ENCODE measurements at regions of chr12 and their contacts with region 1.

Region 1: GRCh38 chr12:53451661-53452158 is at the start of gene PCBP2:
- DNase-seq: peak; percentile 99
- total RNA-seq, gene PCBP2: 520 TPM

Region 2: GRCh38 chr12:52522346-52523011 is 929.2 kb before region 1 on chr12:
- intact Hi-C with region 1: no loop called
- DNase-seq: peak; percentile 69

Region 3: DNA sequence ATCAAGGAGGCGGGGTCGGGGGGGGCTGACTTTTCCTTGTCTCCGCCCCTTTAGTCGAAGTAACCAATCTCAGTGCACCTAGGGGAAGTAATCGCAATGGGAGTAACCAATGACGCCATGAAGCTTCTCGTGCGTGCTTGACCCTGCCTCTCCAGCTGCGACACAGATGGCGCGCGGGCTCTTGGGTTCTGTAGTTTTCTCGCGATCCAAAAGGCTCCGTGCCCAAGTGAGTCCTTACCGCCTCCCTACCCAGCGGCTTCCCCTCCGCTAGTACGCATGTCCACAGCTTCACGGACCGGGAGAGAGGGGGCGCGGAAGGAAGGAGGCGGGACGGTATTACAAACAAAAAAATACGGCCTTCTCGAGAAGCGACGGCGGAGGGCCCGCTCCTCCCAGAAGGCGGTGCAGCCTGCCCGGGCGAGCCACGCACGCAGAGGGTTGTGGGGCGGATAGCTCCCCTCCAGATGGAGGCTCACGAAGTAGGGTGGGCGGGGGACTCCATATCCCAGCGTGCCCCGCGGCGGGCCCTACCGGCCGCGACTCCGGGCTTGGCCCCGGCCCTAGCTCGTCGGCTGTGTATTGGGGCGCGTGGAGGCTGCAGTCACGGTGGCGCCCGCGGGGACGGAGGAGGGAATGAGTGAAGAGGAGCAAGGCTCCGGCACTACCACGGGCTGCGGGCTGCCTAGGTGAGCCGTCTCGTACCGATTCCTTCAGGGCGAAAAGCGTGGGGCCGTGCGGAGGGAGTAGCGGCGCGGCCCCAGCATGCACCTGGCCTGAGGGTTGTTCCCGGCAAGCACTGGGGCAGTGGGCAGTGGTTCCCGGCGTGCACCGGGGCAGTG is 49.3 kb after region 1 on chr12 and contains the start of gene TARBP2:
- intact Hi-C with region 1: loop called (anchors 1 kb)
- DNase-seq: peak; percentile 99
- total RNA-seq, gene TARBP2: 11.6 TPM

Region 4: GRCh38 chr12:53652366-53652765 is 200.7 kb after region 1 on chr12:
- intact Hi-C with region 1: no loop called
- DNase-seq: no peak

Region 5: GRCh38 chr12:53978477-53979356 is 527.0 kb after region 1 on chr12:
- intact Hi-C with region 1: no loop called
- DNase-seq: no peak

Measured in cardiac septum (tissue), 1 donor.